ENCODE measurements at regions of chr18 and their contacts with region 1.

Region 1: GRCh38 chr18:77973745-77974144 is 724.1 kb downstream of the GALR1 start:
- DNase-seq: no peak
- H3K4me3 Mint-ChIP-seq: no peak overlapping the region
- H3K27ac Mint-ChIP-seq: no peak overlapping the region
- H3K4me1 Mint-ChIP-seq: no peaks in the 10 kb centered on the region
- H3K27me3 Mint-ChIP-seq: no peaks in the 10 kb centered on the region

Region 2: DNA sequence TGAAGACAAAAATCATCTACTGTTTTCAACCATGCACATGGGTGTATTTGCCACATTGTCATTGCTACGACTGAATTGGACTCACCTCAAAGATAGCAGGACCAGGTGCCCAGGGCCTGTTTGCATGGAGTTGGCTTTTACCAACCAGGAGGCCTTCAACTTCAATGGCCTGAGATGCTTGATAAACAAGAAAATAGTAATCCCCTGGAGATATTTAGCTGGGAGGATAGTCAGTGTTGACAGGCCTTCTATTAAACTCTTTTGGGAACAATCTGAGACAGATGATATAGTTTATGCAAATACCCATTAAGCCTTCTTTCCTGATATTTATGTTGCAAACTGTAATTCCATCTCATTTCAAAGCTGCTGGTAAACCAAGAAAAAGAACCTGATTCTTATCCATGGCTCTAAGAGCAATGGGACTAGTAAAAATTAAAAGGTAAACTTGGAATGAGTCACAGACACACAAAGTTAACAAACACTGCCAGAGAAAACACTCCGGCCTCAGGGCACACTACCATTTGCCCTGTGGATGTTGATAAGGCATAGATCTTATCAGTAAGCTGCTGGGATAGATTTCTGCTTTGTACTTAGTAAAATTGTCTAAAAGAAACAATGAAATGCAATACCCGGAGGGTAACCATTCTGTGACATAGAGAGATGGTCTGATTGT is 711.1 kb before region 1 on chr18:
- CTCF ChIA-PET with region 1: no interaction called
- POLR2A ChIA-PET with region 1: interaction called, 13 read pairs
- DNase-seq: no peak
- H3K4me3 Mint-ChIP-seq: no peak overlapping the region
- H3K27ac Mint-ChIP-seq: no peak overlapping the region
- H3K4me1 Mint-ChIP-seq: no peaks in the 10 kb centered on the region
- H3K27me3 Mint-ChIP-seq: peaks cover 3% of the 10 kb centered on the region

Region 3: GRCh38 chr18:77960791-77961410 is 12.8 kb before region 1 on chr18:
- CTCF ChIA-PET with region 1: no interaction called
- POLR2A ChIA-PET with region 1: no interaction called
- DNase-seq: no peak
- H3K4me3 Mint-ChIP-seq: no peak overlapping the region
- H3K27ac Mint-ChIP-seq: no peak overlapping the region
- H3K4me1 Mint-ChIP-seq: no peaks in the 10 kb centered on the region
- H3K27me3 Mint-ChIP-seq: no peaks in the 10 kb centered on the region

Region 4: GRCh38 chr18:78273876-78274275 is 300.1 kb after region 1 on chr18:
- CTCF ChIA-PET with region 1: no interaction called
- POLR2A ChIA-PET with region 1: no interaction called
- DNase-seq: no peak
- H3K4me3 Mint-ChIP-seq: no peak overlapping the region
- H3K27ac Mint-ChIP-seq: no peak overlapping the region
- H3K4me1 Mint-ChIP-seq: no peaks in the 10 kb centered on the region
- H3K27me3 Mint-ChIP-seq: no peaks in the 10 kb centered on the region